Breast epithelium (tissue), 4 donors: ENCODE measurements at regions of chr12 and their contacts with region 1.

Region 1: GRCh38 chr12:49109641-49110463 is 795 bp downstream of the LMBR1L start:
- DNase-seq: no peak
- H3K4me3 ChIP-seq: peak overlapping the region; percentile 78 to 97 (median 95)
- H3K27ac ChIP-seq: peak overlapping the region; percentile 94 to 96
- H3K4me1 ChIP-seq: peaks cover 0 to 17% of the 10 kb centered on the region in 2 donors
- H3K27me3 ChIP-seq: no peaks in the 10 kb centered on the region
- CTCF ChIP-seq: no peak
- POLR2A ChIP-seq: no peak

Region 2: GRCh38 chr12:48851883-48852733 is 257.7 kb before region 1 on chr12 and contains the start of gene DDX23:
- intact Hi-C with region 1: no loop called
- DNase-seq: peak; percentile 93 to 95
- H3K4me3 ChIP-seq: peak within 1 kb of the TSS; percentile 74 to 88 (median 85)
- H3K27ac ChIP-seq: peak within 1 kb of the TSS; percentile 88 to 92
- H3K4me1 ChIP-seq: no peaks in the 10 kb centered on the region
- H3K27me3 ChIP-seq: no peaks in the 10 kb centered on the region
- CTCF ChIP-seq: no peak
- POLR2A ChIP-seq: peak; percentile 70
- total RNA-seq, gene DDX23: 65.4 to 89.9 (median 76.0) TPM

Region 3: GRCh38 chr12:49244176-49244575 is 134.3 kb after region 1 on chr12:
- intact Hi-C with region 1: loop called (anchors 10 kb)
- DNase-seq: no peak
- H3K4me3 ChIP-seq: no peak overlapping the region
- H3K27ac ChIP-seq: peak overlapping the region in 1 of 2 donors; percentile 40
- H3K4me1 ChIP-seq: no peaks in the 10 kb centered on the region
- H3K27me3 ChIP-seq: no peaks in the 10 kb centered on the region
- CTCF ChIP-seq: no peak
- POLR2A ChIP-seq: no peak

Region 4: DNA sequence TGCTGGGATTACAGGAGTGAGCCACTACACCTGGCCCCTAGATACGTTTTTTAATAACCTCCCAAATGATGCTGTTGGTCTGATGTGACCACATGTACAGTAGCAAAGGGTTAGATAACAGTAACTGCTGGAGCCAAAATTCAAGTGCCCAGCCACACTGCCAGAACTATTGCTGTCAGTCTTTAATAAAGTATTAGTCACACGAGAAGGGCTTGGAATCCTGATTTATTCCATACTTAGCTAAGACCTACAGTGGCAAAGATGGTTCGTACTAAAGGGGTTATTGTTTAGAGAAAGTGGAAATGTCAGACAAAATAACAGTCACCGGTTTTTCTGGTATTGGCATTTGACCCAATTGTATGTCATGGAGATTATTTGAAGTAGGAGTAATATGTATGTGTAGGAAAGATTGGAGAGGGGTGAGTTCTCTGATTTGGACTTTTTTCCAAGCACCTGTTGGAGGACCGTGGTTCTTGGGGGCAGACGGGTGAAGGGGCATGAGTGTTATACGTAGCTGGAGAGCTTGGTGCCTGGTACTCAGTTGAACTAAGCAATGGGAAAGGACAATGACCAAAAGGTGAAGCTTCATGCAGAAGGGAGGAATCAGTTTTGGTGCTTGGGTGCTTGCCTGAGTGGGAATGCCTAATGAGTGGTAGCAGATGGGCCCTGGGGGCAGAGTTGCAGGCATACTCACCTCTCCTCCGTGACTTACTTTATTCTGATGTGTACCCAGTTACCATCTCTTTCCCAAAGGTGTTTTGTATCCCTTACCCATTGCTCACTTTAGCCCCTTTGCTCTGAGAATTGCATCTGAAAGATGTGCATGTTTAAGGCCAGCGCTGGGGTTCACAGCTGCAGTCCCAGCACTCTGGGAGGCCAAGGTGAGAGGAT is 164.8 kb after region 1 on chr12:
- intact Hi-C with region 1: no loop called
- DNase-seq: no peak
- H3K4me3 ChIP-seq: no peak overlapping the region
- H3K27ac ChIP-seq: no peak overlapping the region
- H3K4me1 ChIP-seq: no peaks in the 10 kb centered on the region
- H3K27me3 ChIP-seq: no peaks in the 10 kb centered on the region
- CTCF ChIP-seq: no peak
- POLR2A ChIP-seq: no peak